Pancreas (tissue), 10 donors: ENCODE measurements at regions of chr1 and their contacts with region 1.

Region 1: GRCh38 chr1:40951943-40952743 is 27.4 kb upstream of the CTPS1 start:
- DNase-seq: peak; percentile 71 to 92 (median 85)
- ATAC-seq: peak; percentile 83 to 93 (median 89)
- H3K4me3 ChIP-seq: no peak overlapping the region
- H3K27ac ChIP-seq: no peak overlapping the region
- H3K4me1 ChIP-seq: peaks cover 0 to 12% (median 5%) of the 10 kb centered on the region in 3 donors
- H3K27me3 ChIP-seq: no peaks in the 10 kb centered on the region
- CTCF ChIP-seq: peak; percentile 85 to 93 (median 88)

Region 2: DNA sequence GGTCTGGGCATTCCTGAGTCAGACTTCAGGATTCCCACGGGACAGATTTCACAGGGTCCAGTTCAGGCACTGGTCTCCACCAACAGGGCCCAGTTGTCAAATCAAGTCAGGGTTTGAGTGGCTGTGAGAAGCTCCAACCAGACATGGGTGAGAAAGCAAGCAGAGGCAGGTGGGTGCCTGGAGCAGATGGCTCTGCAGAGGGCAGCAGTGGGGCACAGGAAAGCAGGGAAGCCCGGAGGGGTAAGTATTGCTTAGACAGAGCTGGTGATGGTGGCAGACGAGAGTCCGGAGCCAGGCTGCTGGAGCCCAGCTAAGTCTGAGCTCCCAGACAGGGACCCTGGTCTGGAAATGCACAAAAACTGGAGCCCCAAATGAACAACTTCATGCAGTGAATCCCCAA is 327.1 kb before region 1 on chr1:
- intact Hi-C with region 1: loop called in 1 of 3 experiments (anchors 10 kb)
- DNase-seq: peak in 5 of 6 donors; percentile 30 to 67 (median 51)
- ATAC-seq: peak; percentile 69 to 97 (median 92)
- H3K4me3 ChIP-seq: no peak overlapping the region
- H3K27ac ChIP-seq: no peak overlapping the region
- H3K4me1 ChIP-seq: peaks cover 0 to 4% (median 0%) of the 10 kb centered on the region in 3 donors
- H3K27me3 ChIP-seq: no peaks in the 10 kb centered on the region
- CTCF ChIP-seq: peak in 3 of 4 donors; percentile 15 to 33 (median 23)

Region 3: DNA sequence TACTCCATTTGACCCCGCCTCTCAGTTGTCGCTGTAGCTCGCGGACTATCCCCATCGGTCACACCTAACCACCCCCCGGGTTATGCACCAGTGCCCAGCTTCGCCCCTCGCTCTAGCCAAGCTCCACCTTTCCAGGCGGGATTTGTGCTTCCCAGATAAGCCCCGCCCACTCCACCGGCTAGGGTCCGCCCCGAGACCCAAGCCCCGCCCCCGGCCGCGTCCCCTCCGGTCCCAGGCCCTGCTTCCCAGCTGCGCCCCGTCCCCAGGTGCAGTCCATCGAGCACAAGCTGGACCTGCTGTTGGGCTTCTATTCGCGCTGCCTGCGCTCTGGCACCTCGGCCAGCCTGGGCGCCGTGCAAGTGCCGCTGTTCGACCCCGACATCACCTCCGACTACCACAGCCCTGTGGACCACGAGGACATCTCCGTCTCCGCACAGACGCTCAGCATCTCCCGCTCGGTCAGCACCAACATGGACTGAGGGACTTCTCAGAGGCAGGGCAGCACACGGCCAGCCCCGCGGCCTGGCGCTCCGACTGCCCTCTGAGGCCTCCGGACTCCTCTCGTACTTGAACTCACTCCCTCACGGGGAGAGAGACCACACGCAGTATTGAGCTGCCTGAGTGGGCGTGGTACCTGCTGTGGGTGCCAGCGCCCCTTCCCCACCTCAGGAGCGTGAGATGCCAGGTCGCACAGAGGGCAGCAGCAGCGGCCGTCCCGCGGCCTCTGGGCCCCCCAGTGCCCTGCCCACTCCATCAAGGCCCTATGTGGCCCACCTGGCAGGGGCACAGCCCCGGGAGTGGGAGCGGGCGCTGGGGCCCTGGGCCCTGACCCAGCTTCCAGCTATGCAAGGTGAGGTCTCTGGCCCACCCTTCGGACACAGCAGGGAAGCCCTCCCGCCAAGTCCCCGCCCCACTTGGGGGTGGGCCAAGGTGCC is 113.8 kb before region 1 on chr1:
- intact Hi-C with region 1: loop called in 1 of 3 experiments (anchors 10 kb)
- DNase-seq: no peak
- ATAC-seq: no peak
- H3K4me3 ChIP-seq: no peak overlapping the region
- H3K27ac ChIP-seq: no peak overlapping the region
- H3K4me1 ChIP-seq: no peaks in the 10 kb centered on the region
- H3K27me3 ChIP-seq: no peaks in the 10 kb centered on the region
- CTCF ChIP-seq: no peak

Region 4: GRCh38 chr1:40849801-40850592 is 102.1 kb before region 1 on chr1:
- intact Hi-C with region 1: loop called in 2 of 3 experiments (anchors 5 kb)
- DNase-seq: peak in 5 of 6 donors; percentile 52 to 84 (median 68)
- ATAC-seq: peak; percentile 78 to 90 (median 82)
- H3K4me3 ChIP-seq: no peak overlapping the region
- H3K27ac ChIP-seq: peak overlapping the region in 1 of 4 donors; percentile 65
- H3K4me1 ChIP-seq: peaks cover 9 to 20% (median 9%) of the 10 kb centered on the region in 3 donors
- H3K27me3 ChIP-seq: no peaks in the 10 kb centered on the region
- CTCF ChIP-seq: peak; percentile 72 to 94 (median 86)

Region 5: GRCh38 chr1:40877698-40878097 is 74.4 kb before region 1 on chr1:
- intact Hi-C with region 1: no loop called
- DNase-seq: peak in 5 of 6 donors; percentile 45 to 73 (median 65)
- ATAC-seq: peak; percentile 38 to 88 (median 78)
- H3K4me3 ChIP-seq: no peak overlapping the region
- H3K27ac ChIP-seq: peak overlapping the region in 3 of 4 donors; percentile 28 to 87 (median 79)
- H3K4me1 ChIP-seq: peaks cover 0 to 11% (median 0%) of the 10 kb centered on the region in 3 donors
- H3K27me3 ChIP-seq: no peaks in the 10 kb centered on the region
- CTCF ChIP-seq: no peak

Region 6: GRCh38 chr1:41013796-41014195 is 61.7 kb after region 1 on chr1:
- intact Hi-C with region 1: loop called in 1 of 3 experiments (anchors 10 kb)
- DNase-seq: no peak
- ATAC-seq: peak in 2 of 4 donors; percentile 41 to 74
- H3K4me3 ChIP-seq: no peak overlapping the region
- H3K27ac ChIP-seq: no peak overlapping the region
- H3K4me1 ChIP-seq: no peaks in the 10 kb centered on the region
- H3K27me3 ChIP-seq: no peaks in the 10 kb centered on the region
- CTCF ChIP-seq: no peak

Region 7: GRCh38 chr1:41024953-41025352 is 72.8 kb after region 1 on chr1:
- intact Hi-C with region 1: no loop called
- DNase-seq: no peak
- ATAC-seq: no peak
- H3K4me3 ChIP-seq: no peak overlapping the region
- H3K27ac ChIP-seq: no peak overlapping the region
- H3K4me1 ChIP-seq: no peaks in the 10 kb centered on the region
- H3K27me3 ChIP-seq: no peaks in the 10 kb centered on the region
- CTCF ChIP-seq: no peak